Activated B cell treated with CpG ODN at 0.5 μM for 24 hours (primary cell): ENCODE measurements at regions of chr4 and their contacts with region 1.

Region 1: DNA sequence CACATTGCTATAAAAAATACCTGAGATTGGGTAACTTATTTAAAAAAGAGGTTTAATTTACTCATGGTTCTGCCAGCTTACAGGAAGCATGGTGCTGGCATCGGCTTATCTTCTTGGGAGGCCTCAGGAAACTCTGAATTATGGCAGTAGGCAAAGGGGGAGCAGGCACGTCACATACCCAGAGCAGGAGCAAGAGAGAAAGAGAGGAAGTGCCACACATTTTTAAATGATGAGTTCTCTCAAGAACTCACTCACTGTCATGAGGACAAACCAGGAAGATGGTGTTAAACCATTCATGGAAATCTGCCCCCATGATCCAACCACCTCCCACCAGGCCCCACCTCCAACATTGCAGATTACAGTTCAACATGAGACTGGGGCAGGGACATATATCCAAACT is 10.0 kb upstream of the AFF1 start:
- DNase-seq: no peak
- ATAC-seq: no peak
- H3K4me3 Mint-ChIP-seq: no peak overlapping the region
- H3K27ac Mint-ChIP-seq: no peak overlapping the region
- H3K4me1 Mint-ChIP-seq: peaks cover 15% of the 10 kb centered on the region
- H3K27me3 Mint-ChIP-seq: no peaks in the 10 kb centered on the region
- CTCF ChIP-seq: no peak

Region 2: GRCh38 chr4:86910820-86911684 is 13.8 kb before region 1 on chr4:
- CTCF ChIA-PET with region 1: interaction called, 14 read pairs
- POLR2A ChIA-PET with region 1: no interaction called
- intact Hi-C with region 1: no loop called
- DNase-seq: no peak
- ATAC-seq: no peak
- H3K4me3 Mint-ChIP-seq: no peak overlapping the region
- H3K27ac Mint-ChIP-seq: no peak overlapping the region
- H3K4me1 Mint-ChIP-seq: peaks cover 31% of the 10 kb centered on the region
- H3K27me3 Mint-ChIP-seq: no peaks in the 10 kb centered on the region
- CTCF ChIP-seq: no peak

Region 3: GRCh38 chr4:86967798-86968197 is 43.0 kb after region 1 on chr4:
- CTCF ChIA-PET with region 1: no interaction called
- POLR2A ChIA-PET with region 1: no interaction called
- intact Hi-C with region 1: no loop called
- DNase-seq: no peak
- ATAC-seq: no peak
- H3K4me3 Mint-ChIP-seq: no peak overlapping the region
- H3K27ac Mint-ChIP-seq: no peak overlapping the region
- H3K4me1 Mint-ChIP-seq: peaks cover 6% of the 10 kb centered on the region
- H3K27me3 Mint-ChIP-seq: no peaks in the 10 kb centered on the region
- CTCF ChIP-seq: no peak

Region 4: GRCh38 chr4:86999136-86999643 is 74.4 kb after region 1 on chr4:
- CTCF ChIA-PET with region 1: interaction called, 14 read pairs
- POLR2A ChIA-PET with region 1: interaction called, 4 read pairs
- intact Hi-C with region 1: no loop called
- DNase-seq: no peak
- ATAC-seq: no peak
- H3K4me3 Mint-ChIP-seq: peak overlapping the region; percentile 6
- H3K27ac Mint-ChIP-seq: peak overlapping the region; percentile 42
- H3K4me1 Mint-ChIP-seq: peaks cover 49% of the 10 kb centered on the region
- H3K27me3 Mint-ChIP-seq: no peaks in the 10 kb centered on the region
- CTCF ChIP-seq: no peak

Region 5: GRCh38 chr4:87038837-87039615 is 114.2 kb after region 1 on chr4:
- CTCF ChIA-PET with region 1: interaction called, 14 read pairs
- POLR2A ChIA-PET with region 1: interaction called, 5 read pairs
- intact Hi-C with region 1: no loop called
- DNase-seq: no peak
- ATAC-seq: peak; percentile 83
- H3K4me3 Mint-ChIP-seq: peak overlapping the region; percentile 22
- H3K27ac Mint-ChIP-seq: peak overlapping the region; percentile 14
- H3K4me1 Mint-ChIP-seq: peaks cover 80% of the 10 kb centered on the region
- H3K27me3 Mint-ChIP-seq: no peaks in the 10 kb centered on the region
- CTCF ChIP-seq: no peak

Region 6: GRCh38 chr4:87093443-87094123 is 168.8 kb after region 1 on chr4:
- CTCF ChIA-PET with region 1: interaction called, 313 read pairs
- POLR2A ChIA-PET with region 1: interaction called, 24 read pairs
- intact Hi-C with region 1: loop called (anchors 1 kb)
- DNase-seq: no peak
- ATAC-seq: peak; percentile 89
- H3K4me3 Mint-ChIP-seq: no peak overlapping the region
- H3K27ac Mint-ChIP-seq: peak overlapping the region; percentile 62
- H3K4me1 Mint-ChIP-seq: peaks cover 20% of the 10 kb centered on the region
- H3K27me3 Mint-ChIP-seq: no peaks in the 10 kb centered on the region
- CTCF ChIP-seq: peak; percentile 15

Region 7: GRCh38 chr4:87150498-87151261 is 225.9 kb after region 1 on chr4:
- CTCF ChIA-PET with region 1: interaction called, 23 read pairs
- POLR2A ChIA-PET with region 1: no interaction called
- intact Hi-C with region 1: loop called (anchors 1 kb)
- DNase-seq: no peak
- ATAC-seq: peak; percentile 77
- H3K4me3 Mint-ChIP-seq: no peak overlapping the region
- H3K27ac Mint-ChIP-seq: no peak overlapping the region
- H3K4me1 Mint-ChIP-seq: no peaks in the 10 kb centered on the region
- H3K27me3 Mint-ChIP-seq: no peaks in the 10 kb centered on the region
- CTCF ChIP-seq: peak; percentile 16

Region 8: GRCh38 chr4:87235020-87235671 is 310.3 kb after region 1 on chr4:
- CTCF ChIA-PET with region 1: interaction called, 7 read pairs
- POLR2A ChIA-PET with region 1: interaction called, 5 read pairs
- intact Hi-C with region 1: loop called (anchors 1 kb)
- DNase-seq: no peak
- ATAC-seq: no peak
- H3K4me3 Mint-ChIP-seq: peak overlapping the region; percentile 80
- H3K27ac Mint-ChIP-seq: no peak overlapping the region
- H3K4me1 Mint-ChIP-seq: peaks cover 3% of the 10 kb centered on the region
- H3K27me3 Mint-ChIP-seq: peaks cover 1% of the 10 kb centered on the region
- CTCF ChIP-seq: no peak